Panc1 (cell line): ENCODE measurements at regions of chr6 and their contacts with region 1.

Region 1: DNA sequence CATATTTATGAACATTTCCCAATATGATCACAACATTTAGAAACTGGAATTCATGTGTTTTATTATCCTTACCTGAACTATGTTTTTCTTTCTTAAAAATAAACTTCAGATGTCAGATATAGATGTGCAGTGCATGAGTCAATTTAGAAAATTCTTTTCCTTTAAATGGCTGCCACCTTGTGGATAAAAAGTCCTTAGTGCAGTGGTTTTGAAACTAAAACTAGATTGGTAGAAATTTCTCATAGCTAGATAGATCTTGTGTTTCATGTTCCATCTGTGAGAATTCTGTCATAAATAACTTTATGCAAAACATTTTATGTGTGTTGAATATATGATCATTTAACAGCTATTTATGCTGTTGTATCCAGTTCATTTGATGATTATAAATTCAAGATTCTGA is 134.9 kb downstream of the KLHL32 start:
- DNase-seq: no peak
- ATAC-seq: no peak; the same call in 1 of the 2 replicates
- H3K4me3 ChIP-seq: no peak overlapping the region
- H3K27ac ChIP-seq: no peak overlapping the region
- H3K4me1 ChIP-seq: no peaks in the 10 kb centered on the region; the same call in 1 of the 2 replicates
- H3K27me3 ChIP-seq: peaks cover 8% of the 10 kb centered on the region
- CTCF ChIP-seq: peak; percentile 59; the same call in 1 of the 2 replicates

Region 2: GRCh38 chr6:96626759-96627364 is 432.6 kb before region 1 on chr6:
- CTCF ChIA-PET with region 1: no interaction called
- POLR2A ChIA-PET with region 1: no interaction called
- in situ Hi-C with region 1: no loop called
- intact Hi-C with region 1: loop called (anchors 2 kb)
- DNase-seq: no peak
- ATAC-seq: no peak
- H3K4me3 ChIP-seq: no peak overlapping the region
- H3K27ac ChIP-seq: no peak overlapping the region
- H3K4me1 ChIP-seq: no peaks in the 10 kb centered on the region
- H3K27me3 ChIP-seq: peaks cover 2% of the 10 kb centered on the region; the same call in 1 of the 2 replicates
- CTCF ChIP-seq: peak; percentile 52; the same call in 1 of the 2 replicates

Region 3: GRCh38 chr6:96897383-96898240 is 161.9 kb before region 1 on chr6 and contains the start of gene NDUFAF4:
- CTCF ChIA-PET with region 1: no interaction called
- POLR2A ChIA-PET with region 1: no interaction called
- in situ Hi-C with region 1: no loop called
- intact Hi-C with region 1: loop called (anchors 1 kb)
- DNase-seq: peak; percentile 79
- ATAC-seq: peak; percentile 96
- H3K4me3 ChIP-seq: peak within 1 kb of the TSS; percentile 90 to 92
- H3K27ac ChIP-seq: peak within 1 kb of the TSS; percentile 92
- H3K4me1 ChIP-seq: peaks cover 15% of the 10 kb centered on the region
- H3K27me3 ChIP-seq: no peaks in the 10 kb centered on the region
- CTCF ChIP-seq: peak; percentile 99
- total RNA-seq, gene NDUFAF4: 42.0 TPM

Region 4: DNA sequence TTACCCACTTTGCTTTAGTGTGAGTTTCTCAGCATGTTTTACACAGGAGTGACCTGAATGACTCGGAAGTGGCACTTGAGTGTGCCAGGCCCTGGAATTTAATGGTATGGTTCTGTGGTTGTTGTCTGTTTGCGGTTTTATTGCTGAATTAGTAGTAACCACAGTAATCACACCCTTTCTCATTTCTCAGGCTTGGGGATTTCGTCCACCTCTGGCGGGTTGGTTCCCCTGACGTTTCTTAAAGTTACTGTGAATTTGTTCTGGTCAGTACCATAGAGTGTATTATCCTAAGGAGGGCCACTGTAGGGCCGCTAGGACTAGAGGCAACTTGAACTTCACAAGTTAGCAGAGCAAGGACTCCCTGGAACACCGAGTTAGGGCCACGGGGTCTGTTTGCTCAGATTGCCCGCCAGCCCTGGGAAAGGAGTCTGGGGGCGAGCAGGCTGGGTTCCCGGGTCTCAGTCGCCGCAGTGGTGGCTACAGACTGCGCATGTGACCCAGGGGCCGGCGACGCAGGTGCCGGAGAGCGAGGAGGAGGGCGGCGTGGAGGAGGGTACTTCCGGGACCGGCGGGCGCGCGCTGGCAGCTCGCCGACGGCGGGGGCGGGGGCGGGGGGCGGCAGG is 135.5 kb before region 1 on chr6:
- CTCF ChIA-PET with region 1: interaction called, 12 read pairs
- POLR2A ChIA-PET with region 1: no interaction called
- in situ Hi-C with region 1: no loop called
- intact Hi-C with region 1: no loop called
- DNase-seq: no peak
- ATAC-seq: peak; percentile 80
- H3K4me3 ChIP-seq: peak overlapping the region; percentile 53 to 60
- H3K27ac ChIP-seq: 0 out of 2 replicates have a peak overlapping the region, but pooled peaks have one; percentile 34
- H3K4me1 ChIP-seq: peaks cover 4% of the 10 kb centered on the region; the same call in 1 of the 2 replicates
- H3K27me3 ChIP-seq: peaks cover 42% of the 10 kb centered on the region
- CTCF ChIP-seq: no peak

Region 5: GRCh38 chr6:96947055-96947454 is 112.4 kb before region 1 on chr6:
- CTCF ChIA-PET with region 1: no interaction called
- POLR2A ChIA-PET with region 1: no interaction called
- in situ Hi-C with region 1: no loop called
- intact Hi-C with region 1: no loop called
- DNase-seq: no peak
- ATAC-seq: no peak
- H3K4me3 ChIP-seq: no peak overlapping the region
- H3K27ac ChIP-seq: no peak overlapping the region
- H3K4me1 ChIP-seq: no peaks in the 10 kb centered on the region
- H3K27me3 ChIP-seq: peaks cover 7% of the 10 kb centered on the region; the same call in 1 of the 2 replicates
- CTCF ChIP-seq: no peak

Region 6: DNA sequence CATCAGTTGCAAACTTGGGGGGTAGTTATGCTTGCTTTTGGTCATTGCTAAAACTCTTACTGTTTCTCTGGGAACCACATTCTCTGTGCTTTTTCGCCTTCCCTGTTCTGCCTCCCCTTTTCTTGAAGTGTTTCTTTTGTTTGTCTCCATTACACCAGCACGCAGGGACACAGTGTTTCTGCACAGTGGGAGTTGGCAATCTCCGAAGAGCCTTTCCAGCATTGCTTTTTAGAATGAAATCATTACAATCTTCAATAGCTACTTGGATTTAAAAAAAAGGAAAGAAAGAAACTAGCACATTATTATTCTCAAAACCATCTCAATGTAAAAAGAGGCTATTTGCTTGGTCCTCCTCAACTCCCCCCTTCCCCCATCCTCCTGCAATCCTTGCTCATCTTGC is 760.2 kb after region 1 on chr6:
- CTCF ChIA-PET with region 1: no interaction called
- POLR2A ChIA-PET with region 1: no interaction called
- in situ Hi-C with region 1: no loop called
- intact Hi-C with region 1: no loop called
- DNase-seq: no peak
- ATAC-seq: no peak
- H3K4me3 ChIP-seq: no peak overlapping the region
- H3K27ac ChIP-seq: no peak overlapping the region
- H3K4me1 ChIP-seq: no peaks in the 10 kb centered on the region
- H3K27me3 ChIP-seq: no peaks in the 10 kb centered on the region
- CTCF ChIP-seq: no peak